ENCODE measurements at regions of chr1 and their contacts with region 1.

Region 1: DNA sequence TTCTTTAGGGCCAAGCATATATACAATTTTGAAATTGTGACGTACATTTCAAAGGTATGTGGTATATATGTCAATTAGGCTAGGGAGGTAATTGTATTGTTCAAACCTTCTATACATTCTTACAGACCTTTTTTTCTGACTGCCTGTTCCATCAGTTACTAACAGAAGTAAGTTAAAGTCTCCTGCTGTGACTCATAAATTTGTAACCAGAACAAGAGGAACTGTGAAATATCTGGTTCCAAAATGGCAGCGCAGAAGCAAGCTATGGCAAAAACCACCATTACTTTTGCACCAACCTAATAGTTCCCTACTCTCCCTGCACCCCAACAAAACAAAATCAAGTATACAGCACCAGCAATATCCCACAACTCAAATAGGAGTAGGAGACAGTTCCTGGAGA is 93.6 kb downstream of the ENAH start:
- DNase-seq: no peak
- H3K4me3 ChIP-seq: no peak overlapping the region
- H3K27ac ChIP-seq: no peak overlapping the region
- H3K4me1 ChIP-seq: peaks cover 0 to 9% of the 10 kb centered on the region in 2 donors
- H3K27me3 ChIP-seq: no peaks in the 10 kb centered on the region
- CTCF ChIP-seq: no peak
- POLR2A ChIP-seq: no peak

Region 2: DNA sequence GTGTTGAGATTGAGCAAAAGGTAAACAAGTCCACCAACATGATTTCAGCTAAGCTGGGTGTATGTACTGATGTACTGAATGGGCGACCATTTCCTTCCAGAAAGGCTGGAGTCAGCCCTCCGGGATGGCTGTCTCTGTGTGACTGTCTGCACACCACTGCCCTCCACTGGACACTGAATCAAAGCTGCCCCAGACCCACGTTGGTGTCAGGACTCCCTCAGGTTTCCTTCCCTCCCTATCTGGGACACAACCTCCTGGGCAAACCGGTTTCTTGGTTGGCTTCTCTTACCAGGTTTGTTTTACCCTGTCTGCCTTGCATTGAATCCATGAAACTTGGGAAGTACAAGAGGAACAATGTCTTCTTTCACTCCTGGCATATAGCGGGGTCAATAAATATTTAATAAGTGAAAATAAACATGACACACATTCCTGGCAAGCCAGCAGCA is 213.0 kb after region 1 on chr1:
- intact Hi-C with region 1: loop called (anchors 5 to 10 kb)
- DNase-seq: peak; percentile 85 to 94 (median 90)
- H3K4me3 ChIP-seq: no peak overlapping the region
- H3K27ac ChIP-seq: peak overlapping the region in 3 of 5 donors; percentile 43 to 65 (median 57)
- H3K4me1 ChIP-seq: peaks cover 9 to 54% of the 10 kb centered on the region in 2 donors
- H3K27me3 ChIP-seq: no peaks in the 10 kb centered on the region
- CTCF ChIP-seq: peak; percentile 58 to 96 (median 90)
- POLR2A ChIP-seq: no peak